ENCODE measurements at regions of chr19 and their contacts with region 1.

Region 1: GRCh38 chr19:42199440-42200115 is 17.9 kb downstream of the DEDD2 start:
- DNase-seq: peak in 8 of 9 donors; percentile 40 to 69 (median 48)
- ATAC-seq: peak; percentile 49
- H3K4me3 ChIP-seq: peak overlapping the region; percentile 52
- H3K4me3 Mint-ChIP-seq: peak overlapping the region; percentile 78 to 97 (median 86)
- H3K27ac ChIP-seq: peak overlapping the region; percentile 82
- H3K27ac Mint-ChIP-seq: peak overlapping the region; percentile 84 to 96 (median 92)
- H3K4me1 ChIP-seq: peaks cover 71 to 75% of the 10 kb centered on the region in 2 donors
- H3K4me1 Mint-ChIP-seq: peaks cover 70 to 89% (median 80%) of the 10 kb centered on the region in 7 donors
- H3K27me3 ChIP-seq: no peaks in the 10 kb centered on the region
- H3K27me3 Mint-ChIP-seq: no peaks in the 10 kb centered on the region

Region 2: DNA sequence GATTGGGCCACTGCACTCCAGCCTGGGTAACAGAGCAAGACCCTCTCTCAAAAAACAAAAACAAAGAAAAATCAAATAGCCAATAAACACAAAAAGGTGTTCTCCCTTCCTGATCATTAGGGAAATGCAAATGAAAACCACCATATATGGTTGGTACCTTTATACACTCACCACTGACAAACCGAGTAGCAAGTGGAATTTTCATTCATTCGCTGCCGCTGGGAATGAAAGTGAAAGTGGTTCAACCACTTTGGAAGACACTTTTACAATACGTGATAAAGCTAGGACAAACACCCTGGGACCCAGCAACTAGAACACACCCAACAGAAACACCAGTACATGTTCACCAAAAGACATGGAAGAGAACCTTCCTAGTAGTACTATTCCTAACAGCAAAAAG is 150.6 kb before region 1 on chr19:
- CTCF ChIA-PET with region 1: no interaction called
- POLR2A ChIA-PET with region 1: no interaction called
- intact Hi-C with region 1: no loop called
- DNase-seq: no peak
- ATAC-seq: no peak
- H3K4me3 ChIP-seq: peak overlapping the region; percentile 4
- H3K4me3 Mint-ChIP-seq: peak overlapping the region; percentile 14 to 84 (median 73)
- H3K27ac ChIP-seq: no peak overlapping the region
- H3K27ac Mint-ChIP-seq: peak overlapping the region in 6 of 9 donors; percentile 5 to 74 (median 42)
- H3K4me1 ChIP-seq: peaks cover 0 to 5% of the 10 kb centered on the region in 2 donors
- H3K4me1 Mint-ChIP-seq: peaks cover 5 to 8% (median 7%) of the 10 kb centered on the region in 7 donors
- H3K27me3 ChIP-seq: no peaks in the 10 kb centered on the region
- H3K27me3 Mint-ChIP-seq: peaks cover 0 to 5% (median under 1%) of the 10 kb centered on the region in 5 donors

Region 3: GRCh38 chr19:42176990-42177685 is 22.4 kb before region 1 on chr19:
- CTCF ChIA-PET with region 1: interaction called, 3 read pairs
- POLR2A ChIA-PET with region 1: interaction called, 4 read pairs
- intact Hi-C with region 1: loop called (anchors 1 to 2 kb)
- DNase-seq: peak; percentile 52 to 82 (median 67)
- ATAC-seq: peak; percentile 96
- H3K4me3 ChIP-seq: peak overlapping the region; percentile 41
- H3K4me3 Mint-ChIP-seq: peak overlapping the region in 1 of 10 donors; percentile 12
- H3K27ac ChIP-seq: no peak overlapping the region
- H3K27ac Mint-ChIP-seq: no peak overlapping the region
- H3K4me1 ChIP-seq: peaks cover 12 to 21% of the 10 kb centered on the region in 2 donors
- H3K4me1 Mint-ChIP-seq: peaks cover 16 to 24% (median 19%) of the 10 kb centered on the region in 7 donors
- H3K27me3 ChIP-seq: peaks cover 0 to 11% of the 10 kb centered on the region in 2 donors
- H3K27me3 Mint-ChIP-seq: peaks cover 13 to 34% (median 19%) of the 10 kb centered on the region in 5 donors

Region 4: DNA sequence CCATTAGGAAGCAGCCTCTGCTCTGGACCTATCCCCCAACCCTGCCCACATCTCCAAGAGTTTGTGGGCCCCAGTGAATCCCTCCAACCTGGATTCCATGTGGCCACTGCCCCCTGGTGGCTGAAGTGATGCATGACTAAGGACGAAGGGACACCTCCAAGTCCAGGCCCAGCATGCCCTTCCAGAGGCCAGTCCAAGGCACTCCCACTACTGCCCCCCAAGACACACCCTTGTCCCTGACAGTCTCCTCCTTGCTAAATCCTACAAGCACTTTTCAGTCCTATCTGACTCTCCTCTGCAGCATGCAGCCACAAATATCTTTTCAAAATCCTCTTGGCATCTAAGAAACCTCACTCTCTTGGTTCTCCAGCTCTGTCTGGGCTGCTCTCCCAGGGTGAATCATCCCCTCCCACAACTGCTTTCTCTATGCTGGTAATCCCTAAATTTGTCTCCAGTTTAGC is 15.1 kb before region 1 on chr19:
- CTCF ChIA-PET with region 1: interaction called, 8 read pairs
- POLR2A ChIA-PET with region 1: interaction called, 9 read pairs
- intact Hi-C with region 1: loop called (anchors 1 to 2 kb)
- DNase-seq: peak; percentile 29 to 76 (median 51)
- ATAC-seq: peak; percentile 68
- H3K4me3 ChIP-seq: no peak overlapping the region
- H3K4me3 Mint-ChIP-seq: peak overlapping the region in 7 of 10 donors; percentile 28 to 71 (median 55)
- H3K27ac ChIP-seq: no peak overlapping the region
- H3K27ac Mint-ChIP-seq: peak overlapping the region; percentile 41 to 73 (median 65)
- H3K4me1 ChIP-seq: peaks cover 25 to 29% of the 10 kb centered on the region in 2 donors
- H3K4me1 Mint-ChIP-seq: peaks cover 43 to 62% (median 52%) of the 10 kb centered on the region in 7 donors
- H3K27me3 ChIP-seq: no peaks in the 10 kb centered on the region
- H3K27me3 Mint-ChIP-seq: peaks cover 0 to 16% (median 0%) of the 10 kb centered on the region in 5 donors

Region 5: GRCh38 chr19:42229855-42230351 is 30.3 kb after region 1 on chr19:
- CTCF ChIA-PET with region 1: no interaction called
- POLR2A ChIA-PET with region 1: no interaction called
- intact Hi-C with region 1: no loop called
- DNase-seq: no peak
- ATAC-seq: no peak
- H3K4me3 ChIP-seq: no peak overlapping the region
- H3K4me3 Mint-ChIP-seq: no peak overlapping the region
- H3K27ac ChIP-seq: no peak overlapping the region
- H3K27ac Mint-ChIP-seq: peak overlapping the region in 7 of 9 donors; percentile 9 to 72 (median 50)
- H3K4me1 ChIP-seq: no peaks in the 10 kb centered on the region
- H3K4me1 Mint-ChIP-seq: peaks cover 17 to 38% (median 21%) of the 10 kb centered on the region in 7 donors
- H3K27me3 ChIP-seq: no peaks in the 10 kb centered on the region
- H3K27me3 Mint-ChIP-seq: no peaks in the 10 kb centered on the region

Region 6: GRCh38 chr19:42254989-42255765 is 55.6 kb after region 1 on chr19 and contains the start of gene ERF:
- CTCF ChIA-PET with region 1: no interaction called
- POLR2A ChIA-PET with region 1: interaction called, 3 read pairs
- intact Hi-C with region 1: loop called in 1 of 2 experiments (anchors 2 kb)
- DNase-seq: peak; percentile 90 to 98 (median 94)
- ATAC-seq: peak; percentile 90
- H3K4me3 ChIP-seq: peak within 1 kb of the TSS; percentile 96
- H3K4me3 Mint-ChIP-seq: peak within 1 kb of the TSS; percentile 42 to 99 (median 77)
- H3K27ac ChIP-seq: peak within 1 kb of the TSS; percentile 99
- H3K27ac Mint-ChIP-seq: peak within 1 kb of the TSS in 8 of 9 donors; percentile 43 to 92 (median 82)
- H3K4me1 ChIP-seq: peaks cover 20 to 29% of the 10 kb centered on the region in 2 donors
- H3K4me1 Mint-ChIP-seq: peaks cover 20 to 37% (median 30%) of the 10 kb centered on the region in 7 donors
- H3K27me3 ChIP-seq: no peaks in the 10 kb centered on the region
- H3K27me3 Mint-ChIP-seq: peaks cover 0 to 10% (median 0%) of the 10 kb centered on the region in 5 donors
- total RNA-seq, gene ERF: 42.5 to 105 (median 51.8) TPM

Region 7: GRCh38 chr19:42268704-42269477 is 69.3 kb after region 1 on chr19 and contains the start of gene CIC:
- CTCF ChIA-PET with region 1: no interaction called
- POLR2A ChIA-PET with region 1: no interaction called
- intact Hi-C with region 1: loop called in 1 of 2 experiments (anchors 1 kb)
- DNase-seq: peak; percentile 95 to 100 (median 99)
- ATAC-seq: peak; percentile 82
- H3K4me3 ChIP-seq: peak within 1 kb of the TSS; percentile 85
- H3K4me3 Mint-ChIP-seq: peak within 1 kb of the TSS in 1 of 10 donors; percentile 94
- H3K27ac ChIP-seq: peak within 1 kb of the TSS; percentile 96
- H3K27ac Mint-ChIP-seq: peak within 1 kb of the TSS in 4 of 9 donors; percentile 98 to 99 (median 99)
- H3K4me1 ChIP-seq: peaks cover 23 to 29% of the 10 kb centered on the region in 2 donors
- H3K4me1 Mint-ChIP-seq: peaks cover 8 to 31% (median 25%) of the 10 kb centered on the region in 7 donors
- H3K27me3 ChIP-seq: no peaks in the 10 kb centered on the region
- H3K27me3 Mint-ChIP-seq: no peaks in the 10 kb centered on the region
- total RNA-seq, gene CIC: 90.4 to 134 (median 102) TPM

Region 8: DNA sequence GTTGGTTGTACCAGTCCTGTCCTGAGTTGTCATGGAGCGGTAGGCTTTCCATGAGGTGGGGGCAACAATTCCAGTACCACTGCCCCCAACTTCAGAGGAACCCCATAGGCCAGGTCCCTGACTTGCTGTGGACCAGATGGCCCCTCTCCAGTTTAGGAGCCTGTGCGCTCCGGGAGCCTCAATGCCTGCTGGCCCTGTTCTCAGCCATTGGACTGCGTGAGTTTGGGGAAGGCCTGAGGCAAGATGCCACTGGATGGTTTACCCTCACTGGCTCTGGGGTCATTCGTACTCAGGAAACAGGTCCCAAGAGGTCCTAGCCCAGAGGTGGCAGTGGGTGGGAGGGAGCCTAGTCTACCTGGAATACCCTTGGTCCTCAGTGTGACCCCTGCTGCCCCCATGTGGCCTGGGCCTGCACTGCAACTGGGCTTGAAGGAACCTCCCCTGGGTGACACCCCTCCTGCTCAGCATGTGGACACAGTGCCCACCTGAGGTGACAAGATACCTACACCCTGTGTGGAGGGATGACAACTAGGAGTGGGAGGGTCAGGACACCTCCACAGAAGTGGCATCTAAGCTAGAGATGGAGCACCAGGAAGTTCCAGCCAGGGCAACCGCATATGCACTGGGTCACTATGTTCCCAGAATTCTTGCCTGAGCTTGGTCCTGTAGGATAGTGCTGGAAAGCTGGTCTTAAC is 96.4 kb after region 1 on chr19:
- CTCF ChIA-PET with region 1: interaction called, 3 read pairs
- POLR2A ChIA-PET with region 1: no interaction called
- intact Hi-C with region 1: loop called in 1 of 2 experiments (anchors 1 kb)
- DNase-seq: peak; percentile 76 to 94 (median 85)
- ATAC-seq: peak; percentile 96
- H3K4me3 ChIP-seq: no peak overlapping the region
- H3K4me3 Mint-ChIP-seq: no peak overlapping the region
- H3K27ac ChIP-seq: no peak overlapping the region
- H3K27ac Mint-ChIP-seq: peak overlapping the region in 6 of 9 donors; percentile 11 to 70 (median 42)
- H3K4me1 ChIP-seq: peaks cover 0 to 8% of the 10 kb centered on the region in 2 donors
- H3K4me1 Mint-ChIP-seq: peaks cover 8 to 18% (median 12%) of the 10 kb centered on the region in 7 donors
- H3K27me3 ChIP-seq: no peaks in the 10 kb centered on the region
- H3K27me3 Mint-ChIP-seq: no peaks in the 10 kb centered on the region

Region 9: DNA sequence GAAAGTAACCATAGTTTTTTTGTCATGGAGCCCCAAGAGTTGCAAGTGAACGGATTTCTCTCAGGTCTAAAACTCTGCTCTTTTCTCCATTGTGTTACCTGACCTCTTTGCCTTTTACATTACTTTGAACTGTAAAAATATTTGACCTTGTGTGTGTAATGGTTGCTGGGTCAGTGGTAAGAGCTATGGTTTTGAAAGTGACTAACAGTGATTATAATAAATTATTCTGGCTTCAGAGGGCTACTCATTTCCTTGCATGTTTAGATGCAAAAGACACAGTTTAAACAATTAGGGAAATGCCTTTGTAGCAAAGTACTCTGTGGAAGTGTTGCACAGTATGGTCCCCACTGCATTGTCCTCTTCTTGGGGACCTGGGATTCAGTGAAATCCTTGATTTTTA is 595.2 kb after region 1 on chr19:
- CTCF ChIA-PET with region 1: no interaction called
- POLR2A ChIA-PET with region 1: no interaction called
- intact Hi-C with region 1: no loop called
- DNase-seq: no peak
- ATAC-seq: no peak
- H3K4me3 ChIP-seq: no peak overlapping the region
- H3K4me3 Mint-ChIP-seq: no peak overlapping the region
- H3K27ac ChIP-seq: no peak overlapping the region
- H3K27ac Mint-ChIP-seq: no peak overlapping the region
- H3K4me1 ChIP-seq: no peaks in the 10 kb centered on the region
- H3K4me1 Mint-ChIP-seq: no peaks in the 10 kb centered on the region
- H3K27me3 ChIP-seq: no peaks in the 10 kb centered on the region
- H3K27me3 Mint-ChIP-seq: peaks cover 0 to 21% (median 11%) of the 10 kb centered on the region in 5 donors